ENCODE measurements at regions of chr6 and their contacts with region 1.

Region 1: GRCh38 chr6:110981202-110981600 is 637 bp upstream of the RPF2 start:
- DNase-seq: no peak
- H3K4me3 ChIP-seq: peak overlapping the region; percentile 55 to 81 (median 79)
- H3K27ac ChIP-seq: peak overlapping the region; percentile 83
- H3K4me1 ChIP-seq: peaks cover 9% of the 10 kb centered on the region
- H3K27me3 ChIP-seq: no peaks in the 10 kb centered on the region
- CTCF ChIP-seq: no peak

Region 2: DNA sequence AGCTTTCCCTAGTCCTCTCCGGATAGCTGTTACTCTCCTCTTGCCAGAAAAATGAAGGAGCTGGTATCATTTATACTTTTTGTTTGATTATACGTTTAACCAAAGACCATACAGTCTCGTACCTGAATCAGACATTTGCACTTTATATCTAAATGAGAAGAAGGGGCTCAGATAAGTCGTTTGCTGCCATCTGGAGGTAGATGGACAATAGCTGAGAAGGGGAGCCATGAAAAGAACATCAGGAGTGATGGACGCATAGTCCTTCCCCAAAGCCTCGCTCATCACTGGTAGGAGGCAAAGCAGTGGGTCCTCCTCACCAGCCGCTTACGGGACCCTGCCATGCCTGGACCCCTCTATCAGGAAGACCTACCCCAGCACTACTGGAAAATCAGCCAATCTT is 46.0 kb after region 1 on chr6:
- CTCF ChIA-PET with region 1: no interaction called
- dilution Hi-C with region 1: loop called (anchors 5 kb)
- in situ Hi-C with region 1: no loop called
- intact Hi-C with region 1: no loop called
- DNase-seq: no peak
- H3K4me3 ChIP-seq: no peak overlapping the region
- H3K27ac ChIP-seq: no peak overlapping the region
- H3K4me1 ChIP-seq: no peaks in the 10 kb centered on the region
- H3K27me3 ChIP-seq: no peaks in the 10 kb centered on the region
- CTCF ChIP-seq: peak in 1 of 2 donors; percentile 9

Measured in mammary epithelial cell (primary cell).